ENCODE measurements at regions of chr7 and their contacts with region 1.

Region 1: DNA sequence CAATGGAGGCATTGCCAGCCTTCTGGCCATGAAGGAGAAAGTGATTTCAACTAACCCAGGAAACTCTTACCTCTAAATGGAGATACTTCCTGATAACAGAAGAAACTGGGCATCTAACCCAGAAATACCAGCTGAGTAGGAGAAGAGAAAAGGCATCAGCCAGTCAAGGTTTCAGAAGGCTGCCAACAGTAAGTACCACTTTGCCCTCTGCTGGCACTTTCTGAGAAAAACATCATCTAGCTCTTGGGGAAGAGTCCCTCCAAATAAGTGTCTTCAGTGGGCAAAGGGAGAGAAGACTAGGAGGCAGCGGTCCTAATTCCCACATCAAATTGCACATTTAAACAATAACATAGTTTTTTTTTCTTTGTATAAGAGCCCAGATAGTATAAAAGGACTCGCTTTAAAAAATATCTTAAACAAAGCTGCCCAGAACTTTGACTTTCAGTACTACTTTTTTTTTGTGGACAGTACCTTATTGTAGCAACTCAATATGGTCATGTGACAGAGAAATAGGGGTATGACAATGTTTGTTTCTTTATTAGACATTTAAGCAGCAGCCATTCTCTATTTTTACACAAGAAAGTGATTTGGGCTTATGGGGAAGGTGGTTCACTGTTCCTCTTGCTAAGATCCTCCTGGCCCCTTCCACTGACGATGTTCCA is 157.3 kb downstream of the CTTNBP2 start:
- DNase-seq: no peak
- ATAC-seq: no peak
- H3K4me3 ChIP-seq: no peak overlapping the region
- H3K27ac ChIP-seq: no peak overlapping the region
- H3K4me1 ChIP-seq: no peaks in the 10 kb centered on the region
- H3K27me3 ChIP-seq: no peaks in the 10 kb centered on the region

Region 2: GRCh38 chr7:117399820-117400422 is 316.0 kb before region 1 on chr7:
- intact Hi-C with region 1: loop called (anchors 5 kb)
- DNase-seq: no peak
- ATAC-seq: no peak
- H3K4me3 ChIP-seq: no peak overlapping the region
- H3K27ac ChIP-seq: no peak overlapping the region
- H3K4me1 ChIP-seq: peaks cover 2 to 3% of the 10 kb centered on the region in 2 donors
- H3K27me3 ChIP-seq: no peaks in the 10 kb centered on the region

Region 3: DNA sequence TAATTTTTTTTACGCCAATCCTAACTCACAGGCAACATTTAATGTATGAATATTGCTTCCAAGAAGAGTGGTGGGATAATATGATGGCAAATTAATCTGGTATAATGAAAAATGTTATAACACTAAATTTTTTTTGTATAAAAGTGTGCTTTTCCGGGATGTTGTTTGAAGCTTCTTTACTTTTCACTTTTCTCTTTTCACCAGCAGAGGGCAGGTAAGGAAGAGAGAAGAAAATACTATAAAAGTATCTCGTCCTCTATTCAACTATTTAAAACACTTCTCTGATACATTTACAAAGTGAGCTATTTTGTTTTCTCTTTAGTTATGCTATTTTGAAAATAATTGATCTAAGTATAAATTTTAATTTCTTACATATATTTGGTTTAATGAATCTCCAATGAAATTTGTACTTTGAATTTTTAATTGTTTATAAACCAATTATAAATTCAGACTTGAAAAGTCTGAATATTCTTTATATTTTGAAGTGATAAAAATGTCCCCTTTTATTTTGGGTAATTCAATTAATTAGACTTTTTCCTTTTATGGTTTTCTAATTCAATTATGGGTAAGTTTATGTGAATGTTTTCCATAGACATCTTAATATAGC is 256.8 kb before region 1 on chr7:
- intact Hi-C with region 1: loop called (anchors 5 to 10 kb)
- DNase-seq: no peak
- ATAC-seq: no peak
- H3K4me3 ChIP-seq: no peak overlapping the region
- H3K27ac ChIP-seq: no peak overlapping the region
- H3K4me1 ChIP-seq: no peaks in the 10 kb centered on the region
- H3K27me3 ChIP-seq: no peaks in the 10 kb centered on the region

Region 4: GRCh38 chr7:117750612-117751563 is 35.0 kb after region 1 on chr7:
- intact Hi-C with region 1: no loop called
- DNase-seq: no peak
- ATAC-seq: no peak
- H3K4me3 ChIP-seq: no peak overlapping the region
- H3K27ac ChIP-seq: no peak overlapping the region
- H3K4me1 ChIP-seq: no peaks in the 10 kb centered on the region
- H3K27me3 ChIP-seq: no peaks in the 10 kb centered on the region